HepG2 (cell line): ENCODE measurements at regions of chr9 and their contacts with region 1.

Region 1: DNA sequence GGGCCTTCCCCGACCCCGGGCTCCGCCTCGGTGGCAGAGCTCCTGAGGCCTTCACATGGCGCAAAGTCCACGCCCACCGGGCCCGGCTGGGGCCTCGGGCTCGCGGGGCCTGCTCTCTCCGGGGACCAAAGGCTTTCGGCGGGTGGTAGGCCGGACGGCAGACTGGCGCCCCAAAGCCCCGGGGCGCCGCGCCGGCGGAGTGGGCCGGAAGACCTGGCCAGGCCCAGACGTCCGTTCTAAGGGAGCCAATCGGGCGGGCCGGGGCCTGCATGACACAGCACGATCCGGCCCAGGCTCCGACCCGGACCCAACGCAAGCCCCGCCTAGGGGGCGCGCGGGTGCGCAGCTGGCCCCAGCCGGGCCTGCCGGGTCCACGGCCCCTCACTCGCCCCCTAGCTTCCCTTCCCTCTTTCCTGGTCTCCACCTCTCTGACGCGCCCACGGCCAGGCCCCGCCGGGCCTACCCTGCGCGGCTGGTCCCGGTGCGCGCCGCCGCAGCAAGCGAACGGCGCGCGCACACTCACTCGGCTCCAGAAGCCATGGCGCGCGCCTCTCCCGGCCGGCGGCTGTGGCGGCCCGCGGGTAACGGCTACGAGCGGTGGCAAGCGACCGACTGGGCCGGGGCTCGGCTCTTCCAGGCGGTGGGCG is 488 bp downstream of the VCP start:
- DNase-seq: peak; percentile 85
- ATAC-seq: peak; percentile 89
- H3K4me3 ChIP-seq: peak overlapping the region; percentile 92 to 99 (median 93)
- H3K27ac ChIP-seq: peak overlapping the region; percentile 100
- H3K4me1 ChIP-seq: peaks cover 37% of the 10 kb centered on the region
- H3K27me3 ChIP-seq: no peaks in the 10 kb centered on the region; a peak in 1 of 5 replicates
- CTCF ChIP-seq: peak; percentile 69
- EP300 ChIP-seq: peak in 1 of 2 experiments; percentile 46; a peak in 1 of 4 replicates
- POLR2A ChIP-seq: peak in 1 of 2 experiments; percentile 79; a peak in 2 of 4 replicates
- RAD21 ChIP-seq: peak; percentile 56

Region 2: GRCh38 chr9:35001803-35002502 is 70.0 kb before region 1 on chr9:
- CTCF ChIA-PET with region 1: no interaction called
- POLR2A ChIA-PET with region 1: no interaction called
- in situ Hi-C with region 1: no loop called
- intact Hi-C with region 1: no loop called
- DNase-seq: no peak
- ATAC-seq: no peak
- H3K4me3 ChIP-seq: no peak overlapping the region
- H3K27ac ChIP-seq: no peak overlapping the region
- H3K4me1 ChIP-seq: peaks cover 12% of the 10 kb centered on the region
- H3K27me3 ChIP-seq: no peaks in the 10 kb centered on the region
- CTCF ChIP-seq: no peak
- EP300 ChIP-seq: no peak
- POLR2A ChIP-seq: no peak
- RAD21 ChIP-seq: no peak

Region 3: GRCh38 chr9:35051069-35051967 is 20.6 kb before region 1 on chr9:
- CTCF ChIA-PET with region 1: no interaction called
- POLR2A ChIA-PET with region 1: interaction called, 11 read pairs
- in situ Hi-C with region 1: no loop called
- intact Hi-C with region 1: no loop called
- DNase-seq: peak; percentile 45
- ATAC-seq: peak; percentile 75
- H3K4me3 ChIP-seq: no peak overlapping the region
- H3K27ac ChIP-seq: no peak overlapping the region
- H3K4me1 ChIP-seq: no peaks in the 10 kb centered on the region
- H3K27me3 ChIP-seq: no peaks in the 10 kb centered on the region
- CTCF ChIP-seq: peak; percentile 73
- EP300 ChIP-seq: no peak
- POLR2A ChIP-seq: no peak
- RAD21 ChIP-seq: no peak

Region 4: DNA sequence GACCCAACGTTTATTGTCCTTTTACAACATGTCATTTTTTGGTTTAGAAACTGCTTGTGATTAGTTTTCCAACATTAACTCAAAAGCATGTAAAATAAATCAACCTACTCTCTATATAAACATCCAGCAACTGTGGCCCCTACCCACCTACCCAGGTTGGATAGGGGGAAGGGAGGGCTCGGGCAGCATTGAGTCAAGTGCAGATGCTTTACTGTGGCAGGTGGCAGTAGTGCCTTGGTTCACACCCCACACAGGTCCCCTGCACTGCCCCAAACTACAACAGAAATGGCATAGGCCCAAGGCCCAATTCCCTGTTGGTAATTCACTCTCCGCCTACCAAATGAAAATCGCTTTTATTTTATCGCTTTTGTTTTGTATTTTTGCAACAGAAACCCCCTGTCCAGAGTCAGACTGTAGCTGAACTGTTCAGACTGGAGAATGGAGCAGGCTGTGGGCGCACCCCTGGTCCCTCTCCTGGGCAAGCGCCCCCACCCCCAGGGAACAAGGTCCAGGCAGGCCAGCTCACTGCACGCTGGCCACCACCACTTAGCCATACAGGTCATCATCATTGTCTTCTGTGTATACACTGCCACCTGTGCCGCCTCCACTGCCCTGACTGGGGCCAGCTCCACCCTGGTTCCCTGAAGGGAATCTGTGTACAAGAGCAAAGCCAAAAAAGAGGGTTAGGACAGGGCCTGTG is 15.2 kb before region 1 on chr9:
- CTCF ChIA-PET with region 1: no interaction called
- POLR2A ChIA-PET with region 1: interaction called, 16 read pairs
- in situ Hi-C with region 1: no loop called
- intact Hi-C with region 1: no loop called
- DNase-seq: no peak
- ATAC-seq: peak; percentile 37
- H3K4me3 ChIP-seq: no peak overlapping the region
- H3K27ac ChIP-seq: no peak overlapping the region
- H3K4me1 ChIP-seq: no peaks in the 10 kb centered on the region
- H3K27me3 ChIP-seq: no peaks in the 10 kb centered on the region
- CTCF ChIP-seq: no peak
- EP300 ChIP-seq: no peak
- POLR2A ChIP-seq: no peak
- RAD21 ChIP-seq: no peak

Region 5: GRCh38 chr9:35096035-35096849 is 24.3 kb after region 1 on chr9 and contains the start of gene PIGO:
- CTCF ChIA-PET with region 1: interaction called, 9 read pairs
- POLR2A ChIA-PET with region 1: interaction called, 16 read pairs
- in situ Hi-C with region 1: no loop called
- intact Hi-C with region 1: loop called (anchors 1 kb)
- DNase-seq: peak; percentile 83
- ATAC-seq: peak; percentile 93
- H3K4me3 ChIP-seq: peak within 1 kb of the TSS; percentile 77 to 91 (median 83)
- H3K27ac ChIP-seq: peak within 1 kb of the TSS; percentile 98
- H3K4me1 ChIP-seq: peaks cover 26% of the 10 kb centered on the region
- H3K27me3 ChIP-seq: no peaks in the 10 kb centered on the region
- CTCF ChIP-seq: peak; percentile 81
- EP300 ChIP-seq: 0 out of 4 replicates have a peak, but pooled peaks of 1 of the 2 experiments have one; percentile 42
- POLR2A ChIP-seq: peak; percentile 95 to 96
- RAD21 ChIP-seq: peak; percentile 81
- total RNA-seq, gene PIGO: 6.6 and 20.5 TPM in 2 replicates

Region 6: DNA sequence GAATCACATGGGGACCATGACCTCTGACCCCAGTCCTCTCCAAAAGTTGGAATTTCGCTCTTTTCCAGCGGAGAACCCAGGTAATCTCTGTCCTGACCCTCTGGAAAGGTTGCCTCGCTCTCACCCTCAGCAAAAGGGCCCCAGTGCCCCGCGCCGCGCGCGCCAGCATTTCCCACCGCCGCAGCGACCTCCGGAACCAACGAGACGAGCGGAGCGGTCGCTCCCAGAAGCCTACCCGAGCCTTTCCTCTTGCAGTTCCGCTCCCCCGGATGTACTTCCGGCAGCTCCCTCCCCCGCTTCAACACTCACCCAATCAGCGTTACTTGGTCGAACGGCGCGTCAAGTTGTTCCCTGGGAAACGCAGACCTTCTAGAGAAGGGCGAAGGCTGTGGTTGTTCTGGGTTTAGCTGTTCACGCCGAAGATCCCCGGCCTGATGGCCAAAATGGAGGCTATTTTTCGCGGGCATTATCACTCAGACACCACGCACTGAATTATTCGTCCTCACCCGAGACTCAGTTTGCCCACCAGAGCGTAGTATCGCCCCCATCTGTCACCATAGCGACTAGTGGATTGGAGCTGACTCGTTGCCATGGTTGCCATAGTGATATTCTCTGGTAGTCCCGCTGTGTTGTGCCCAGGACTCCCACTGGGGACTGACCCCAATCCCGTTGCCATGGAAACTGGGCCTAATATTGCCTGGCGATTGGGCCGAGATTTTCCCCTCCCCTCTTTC is 31.2 kb after region 1 on chr9 and contains the start of gene STOML2:
- CTCF ChIA-PET with region 1: no interaction called
- POLR2A ChIA-PET with region 1: interaction called, 13 read pairs
- in situ Hi-C with region 1: no loop called
- intact Hi-C with region 1: no loop called
- DNase-seq: peak; percentile 92
- ATAC-seq: peak; percentile 97
- H3K4me3 ChIP-seq: peak within 1 kb of the TSS; percentile 63 to 84 (median 69)
- H3K27ac ChIP-seq: peak within 1 kb of the TSS; percentile 74
- H3K4me1 ChIP-seq: peaks cover 19% of the 10 kb centered on the region
- H3K27me3 ChIP-seq: no peaks in the 10 kb centered on the region; a peak in 1 of 5 replicates
- CTCF ChIP-seq: peak; percentile 55
- EP300 ChIP-seq: peak in 1 of 2 experiments; percentile 49; a peak in 1 of 4 replicates
- POLR2A ChIP-seq: peak; percentile 75 to 90
- RAD21 ChIP-seq: peak; percentile 33; the same call in 1 of the 2 replicates
- total RNA-seq, gene STOML2: 250 and 305 TPM in 2 replicates

Region 7: GRCh38 chr9:35111001-35111933 is 39.3 kb after region 1 on chr9:
- CTCF ChIA-PET with region 1: no interaction called
- POLR2A ChIA-PET with region 1: interaction called, 19 read pairs
- in situ Hi-C with region 1: no loop called
- intact Hi-C with region 1: no loop called
- DNase-seq: peak; percentile 96
- ATAC-seq: peak; percentile 78
- H3K4me3 ChIP-seq: peak overlapping the region; percentile 85 to 86 (median 85)
- H3K27ac ChIP-seq: peak overlapping the region; percentile 10
- H3K4me1 ChIP-seq: peaks cover 43% of the 10 kb centered on the region
- H3K27me3 ChIP-seq: no peaks in the 10 kb centered on the region; a peak in 1 of 5 replicates
- CTCF ChIP-seq: no peak
- EP300 ChIP-seq: no peak
- POLR2A ChIP-seq: 0 out of 4 replicates have a peak, but pooled peaks of 1 of the 2 experiments have one; percentile 24
- RAD21 ChIP-seq: 0 out of 2 replicates have a peak, but pooled peaks have one; percentile 17

Region 8: DNA sequence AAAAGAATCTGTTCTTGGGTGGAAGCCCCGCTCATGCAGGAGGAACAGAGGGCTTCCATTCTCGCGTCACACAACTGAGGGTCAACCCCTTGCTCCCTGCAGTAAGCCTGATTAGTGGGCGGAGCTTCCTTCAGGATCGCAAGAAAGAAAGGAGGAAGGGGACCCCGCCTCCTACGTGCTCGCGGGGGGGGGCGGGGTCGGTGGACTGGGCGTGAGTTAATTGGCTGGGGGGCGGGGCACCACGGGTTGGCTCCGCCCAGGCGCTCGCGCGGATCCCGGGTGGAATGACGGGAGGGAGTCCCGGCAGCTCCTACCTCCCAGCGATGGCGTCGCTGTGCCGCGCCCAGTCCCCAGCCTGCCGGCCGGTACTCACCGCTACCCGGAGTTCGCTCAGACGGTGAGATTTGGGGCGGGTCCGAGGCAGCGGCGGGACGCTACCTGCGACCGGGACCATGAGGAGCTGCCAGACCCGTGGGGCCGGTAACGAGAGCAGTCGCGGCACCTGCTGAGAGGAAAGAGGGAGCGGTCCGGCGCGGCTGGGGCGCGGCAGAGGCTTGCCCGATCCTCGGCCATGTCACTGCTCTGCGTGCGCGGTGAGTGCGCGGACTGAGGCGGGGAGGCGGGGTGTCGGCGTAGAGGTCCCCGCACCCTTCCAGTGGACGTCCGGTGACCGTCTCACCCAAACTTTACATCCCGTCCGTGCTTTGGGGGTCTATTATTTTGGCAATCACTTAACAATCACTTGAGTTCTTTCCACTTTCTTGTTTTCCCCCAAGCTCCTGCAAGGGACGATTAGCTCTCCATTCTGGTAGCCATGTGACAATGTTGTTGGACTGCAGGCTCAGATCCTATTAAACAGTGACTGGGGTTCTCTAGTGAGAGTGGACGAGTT is 90.0 kb after region 1 on chr9 and contains the start of gene UNC13B:
- CTCF ChIA-PET with region 1: no interaction called
- POLR2A ChIA-PET with region 1: interaction called, 11 read pairs
- in situ Hi-C with region 1: no loop called
- intact Hi-C with region 1: no loop called
- DNase-seq: peak; percentile 93
- ATAC-seq: peak; percentile 97
- H3K4me3 ChIP-seq: peak within 1 kb of the TSS; percentile 78 to 98 (median 85)
- H3K27ac ChIP-seq: peak within 1 kb of the TSS; percentile 75
- H3K4me1 ChIP-seq: peaks cover 43% of the 10 kb centered on the region
- H3K27me3 ChIP-seq: no peaks in the 10 kb centered on the region; a peak in 1 of 5 replicates
- CTCF ChIP-seq: peak; percentile 59
- EP300 ChIP-seq: no peak
- POLR2A ChIP-seq: peak; percentile 82 to 84
- RAD21 ChIP-seq: peak; percentile 32
- total RNA-seq, gene UNC13B: 18.3 and 23.6 TPM in 2 replicates